Esophagus muscularis mucosa (tissue), 4 donors: ENCODE measurements at regions of chr5 and their contacts with region 1.

Region 1: DNA sequence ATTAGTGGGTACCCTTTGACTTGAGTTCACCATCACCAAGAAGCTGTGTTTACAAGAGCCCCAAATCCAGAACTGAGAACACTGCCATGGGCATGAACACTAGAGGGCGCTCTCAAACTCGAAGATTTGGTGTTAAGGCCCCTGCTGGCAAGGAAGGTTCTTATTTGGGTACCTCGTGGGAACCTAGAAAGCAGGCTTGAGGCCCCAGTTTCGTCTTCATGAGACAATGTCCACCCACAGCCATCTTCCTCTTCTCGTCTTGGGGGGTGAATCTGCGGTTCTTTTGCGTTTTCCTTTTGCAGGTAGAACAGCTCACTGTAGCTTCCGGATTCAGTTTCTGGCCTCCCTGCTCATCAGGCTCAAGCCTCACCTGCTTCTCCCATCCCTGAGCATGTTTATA is 184.0 kb downstream of the SEMA5A start:
- DNase-seq: no peak
- H3K4me3 ChIP-seq: no peak overlapping the region
- H3K27ac ChIP-seq: no peak overlapping the region
- H3K4me1 ChIP-seq: peaks cover 0 to 21% (median 1%) of the 10 kb centered on the region in 4 donors
- H3K27me3 ChIP-seq: no peaks in the 10 kb centered on the region
- CTCF ChIP-seq: peak; percentile 23 to 56 (median 34)
- EP300 ChIP-seq: no peak
- POLR2A ChIP-seq: no peak

Region 2: GRCh38 chr5:9549941-9550340 is 188.1 kb after region 1 on chr5:
- intact Hi-C with region 1: loop called (anchors 5 kb)
- DNase-seq: no peak
- H3K4me3 ChIP-seq: no peak overlapping the region
- H3K27ac ChIP-seq: no peak overlapping the region
- H3K4me1 ChIP-seq: peaks cover 8 to 30% (median 28%) of the 10 kb centered on the region in 4 donors
- H3K27me3 ChIP-seq: peaks cover 0 to 14% (median under 1%) of the 10 kb centered on the region in 4 donors
- CTCF ChIP-seq: no peak
- EP300 ChIP-seq: no peak
- POLR2A ChIP-seq: no peak